ENCODE measurements at regions of chr16 and their contacts with region 1.

Region 1: DNA sequence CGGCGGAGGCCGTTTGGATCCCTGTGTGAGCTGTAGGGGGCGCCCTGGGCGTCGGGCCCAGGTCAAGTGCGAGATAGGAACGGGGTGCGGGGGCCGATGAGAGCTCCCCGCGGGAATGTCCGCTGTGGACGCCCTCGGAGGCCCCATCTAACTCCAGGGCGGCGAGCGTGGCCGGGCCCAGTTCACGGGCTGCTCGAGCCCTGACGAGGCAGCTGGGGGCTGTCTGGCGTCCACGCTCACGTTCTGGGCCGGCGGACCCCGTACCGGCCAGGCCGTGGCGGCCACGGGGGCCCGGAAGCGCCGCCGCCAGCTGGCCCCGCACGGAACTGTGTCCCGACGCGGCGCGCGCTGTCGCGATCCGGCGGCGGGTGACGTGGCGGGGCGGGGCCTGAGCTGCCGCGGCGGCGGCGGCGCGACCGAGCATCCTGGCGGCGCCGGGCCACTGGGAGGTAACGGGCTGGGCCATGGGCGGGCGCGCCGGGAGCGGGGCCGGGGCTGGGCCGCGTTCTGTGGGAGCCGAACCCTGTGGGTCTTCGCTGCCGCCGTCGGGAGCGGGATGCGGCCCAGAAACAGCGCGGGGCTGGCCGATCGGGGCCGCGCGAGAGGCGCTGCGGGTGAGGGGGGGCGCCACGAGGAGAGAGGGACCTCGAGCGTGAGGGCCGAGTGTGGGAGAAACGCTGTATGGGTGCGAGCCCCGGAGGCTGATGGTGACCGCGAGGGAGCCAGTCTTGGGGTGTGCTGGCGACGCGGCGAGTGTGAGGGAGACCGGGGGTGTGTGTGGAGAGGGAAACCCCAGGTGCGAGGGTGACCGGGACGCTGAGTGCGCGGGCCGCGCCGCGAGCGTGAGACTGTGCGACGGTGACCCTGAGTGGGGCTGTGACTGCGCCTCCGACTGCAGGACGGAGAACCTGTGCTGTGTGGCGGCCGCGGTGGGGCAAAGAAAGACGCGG is at the start of gene SLC7A6:
- DNase-seq: peak; percentile 78
- H3K4me3 ChIP-seq: peak within 1 kb of the TSS; percentile 44 to 69 (median 66)
- H3K27ac ChIP-seq: peak within 1 kb of the TSS; percentile 91
- H3K4me1 ChIP-seq: peaks cover 25% of the 10 kb centered on the region
- H3K27me3 ChIP-seq: no peaks in the 10 kb centered on the region
- CTCF ChIP-seq: peak; percentile 81 to 84
- POLR2A ChIP-seq: peak; percentile 68
- total RNA-seq, gene SLC7A6: 68.0 and 68.7 TPM in 2 replicates

Region 2: DNA sequence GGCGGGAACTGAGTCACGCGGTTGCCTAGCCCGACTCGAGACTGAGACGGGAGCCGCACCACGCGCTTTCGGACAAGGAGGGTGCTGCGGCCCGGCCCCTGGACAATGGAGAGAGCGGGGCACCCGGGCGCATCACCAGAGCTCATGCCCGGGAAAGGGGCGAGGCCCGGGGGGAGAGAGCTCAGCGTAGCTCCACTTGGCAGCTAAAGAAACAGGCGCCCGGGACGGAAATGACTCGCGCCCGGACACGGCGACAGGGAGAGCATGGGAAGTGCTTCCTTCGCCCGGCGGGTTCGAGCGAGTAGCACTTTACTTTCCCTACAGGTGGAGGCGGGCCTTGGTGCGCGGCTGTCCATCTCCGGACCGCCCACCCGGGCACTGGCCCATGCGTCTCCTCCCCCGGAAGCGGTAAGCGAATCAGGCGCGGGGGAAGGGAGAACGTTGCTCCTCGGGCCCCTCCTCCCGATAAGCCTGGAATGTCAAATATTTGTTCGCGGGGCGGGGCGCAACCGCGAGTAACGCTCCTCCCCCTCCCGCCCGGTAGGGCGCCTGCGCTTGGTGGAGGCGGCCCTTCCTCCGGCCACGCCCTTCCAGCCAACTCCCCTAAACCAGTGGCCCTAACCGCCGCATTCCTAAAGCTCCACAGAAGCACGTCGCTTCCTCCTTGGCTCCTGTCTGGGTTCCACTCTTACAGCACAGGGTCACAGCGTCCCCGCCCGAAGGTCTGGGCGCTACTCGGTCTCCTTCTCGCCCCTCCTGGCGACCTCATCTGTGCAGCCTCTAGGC is 27.0 kb before region 1 on chr16:
- CTCF ChIA-PET with region 1: interaction called, 30 read pairs
- POLR2A ChIA-PET with region 1: no interaction called
- dilution Hi-C with region 1: no loop called
- intact Hi-C with region 1: no loop called
- DNase-seq: peak; percentile 98
- H3K4me3 ChIP-seq: peak overlapping the region in 2 of 3 experiments; percentile 42 to 43
- H3K27ac ChIP-seq: peak overlapping the region; percentile 93
- H3K4me1 ChIP-seq: peaks cover 13% of the 10 kb centered on the region
- H3K27me3 ChIP-seq: no peaks in the 10 kb centered on the region
- CTCF ChIP-seq: no peak
- POLR2A ChIP-seq: peak; percentile 99

Region 3: DNA sequence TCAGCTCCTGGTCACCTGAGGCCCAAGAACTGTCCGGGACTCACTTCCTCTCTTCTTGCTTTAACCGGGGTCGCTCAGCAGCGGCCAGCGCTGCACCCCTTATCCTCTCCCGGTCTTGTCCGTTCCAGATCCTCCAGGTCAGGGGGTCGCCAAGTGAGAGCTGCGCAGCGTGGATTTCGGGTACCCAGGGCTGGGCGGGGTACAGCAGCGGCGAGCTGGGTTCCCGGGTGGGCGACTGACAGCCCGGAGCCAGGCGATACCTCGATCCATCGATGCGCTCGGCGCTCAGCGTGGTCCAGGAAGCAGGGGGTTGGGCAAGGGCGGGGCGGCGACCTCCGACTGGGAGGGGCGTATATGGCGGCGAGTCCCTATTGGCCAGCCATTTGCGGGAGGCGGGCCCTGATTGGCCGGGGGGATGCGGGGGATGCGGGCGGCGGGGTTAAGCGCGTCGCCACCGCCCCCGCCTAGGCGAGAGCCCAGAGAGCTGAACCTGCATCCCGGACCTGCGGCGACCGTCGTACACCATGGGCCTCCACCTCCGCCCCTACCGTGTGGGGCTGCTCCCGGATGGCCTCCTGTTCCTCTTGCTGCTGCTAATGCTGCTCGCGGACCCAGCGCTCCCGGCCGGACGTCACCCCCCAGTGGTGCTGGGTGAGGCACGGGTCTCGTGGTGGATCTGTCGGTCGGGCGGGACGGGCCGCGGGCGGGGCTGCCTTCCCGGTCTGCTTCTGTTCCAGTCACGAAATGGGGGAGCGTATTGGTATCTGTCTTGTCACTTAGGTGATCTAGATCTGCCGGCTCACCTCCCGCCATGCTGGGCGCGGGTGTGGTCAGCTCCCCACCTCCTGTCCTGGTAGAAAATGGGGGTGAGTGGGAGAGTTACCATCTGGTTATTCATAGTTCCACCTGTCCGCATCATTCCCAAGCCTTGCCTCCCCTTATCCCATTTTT is 19.2 kb before region 1 on chr16 and contains the start of gene PLA2G15:
- CTCF ChIA-PET with region 1: interaction called, 33 read pairs
- POLR2A ChIA-PET with region 1: interaction called, 11 read pairs
- dilution Hi-C with region 1: no loop called
- intact Hi-C with region 1: loop called (anchors 2 kb)
- DNase-seq: peak; percentile 93
- H3K4me3 ChIP-seq: peak within 1 kb of the TSS; percentile 85 to 98 (median 90)
- H3K27ac ChIP-seq: no peak within 1 kb of the TSS
- H3K4me1 ChIP-seq: peaks cover 9% of the 10 kb centered on the region
- H3K27me3 ChIP-seq: no peaks in the 10 kb centered on the region
- CTCF ChIP-seq: no peak
- POLR2A ChIP-seq: peak; percentile 78
- total RNA-seq, gene PLA2G15: 24.0 and 24.3 TPM in 2 replicates

Region 4: DNA sequence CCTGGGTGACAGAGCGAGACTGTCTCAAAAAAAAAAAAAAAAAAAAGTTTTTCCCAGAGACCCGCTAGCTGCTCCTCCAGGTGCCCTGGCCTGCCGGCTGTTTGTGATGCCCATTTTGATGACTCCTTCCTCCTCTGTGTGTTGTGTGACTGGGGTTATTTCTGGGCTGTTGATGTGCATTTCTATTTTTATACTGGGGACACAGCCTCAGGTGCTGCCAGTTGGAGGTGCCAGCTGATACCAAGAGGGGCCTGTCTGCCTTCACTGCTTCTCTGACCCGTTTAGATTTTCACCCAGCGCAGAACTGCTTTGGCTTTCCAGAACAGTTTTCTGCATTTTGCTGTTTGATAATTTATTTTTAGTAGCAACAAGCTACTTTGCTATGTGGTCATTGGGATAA is 12.6 kb before region 1 on chr16:
- CTCF ChIA-PET with region 1: interaction called, 33 read pairs
- POLR2A ChIA-PET with region 1: interaction called, 3 read pairs
- dilution Hi-C with region 1: no loop called
- intact Hi-C with region 1: no loop called
- DNase-seq: no peak
- H3K4me3 ChIP-seq: no peak overlapping the region
- H3K27ac ChIP-seq: no peak overlapping the region
- H3K4me1 ChIP-seq: no peaks in the 10 kb centered on the region
- H3K27me3 ChIP-seq: no peaks in the 10 kb centered on the region
- CTCF ChIP-seq: no peak
- POLR2A ChIP-seq: no peak

Region 5: DNA sequence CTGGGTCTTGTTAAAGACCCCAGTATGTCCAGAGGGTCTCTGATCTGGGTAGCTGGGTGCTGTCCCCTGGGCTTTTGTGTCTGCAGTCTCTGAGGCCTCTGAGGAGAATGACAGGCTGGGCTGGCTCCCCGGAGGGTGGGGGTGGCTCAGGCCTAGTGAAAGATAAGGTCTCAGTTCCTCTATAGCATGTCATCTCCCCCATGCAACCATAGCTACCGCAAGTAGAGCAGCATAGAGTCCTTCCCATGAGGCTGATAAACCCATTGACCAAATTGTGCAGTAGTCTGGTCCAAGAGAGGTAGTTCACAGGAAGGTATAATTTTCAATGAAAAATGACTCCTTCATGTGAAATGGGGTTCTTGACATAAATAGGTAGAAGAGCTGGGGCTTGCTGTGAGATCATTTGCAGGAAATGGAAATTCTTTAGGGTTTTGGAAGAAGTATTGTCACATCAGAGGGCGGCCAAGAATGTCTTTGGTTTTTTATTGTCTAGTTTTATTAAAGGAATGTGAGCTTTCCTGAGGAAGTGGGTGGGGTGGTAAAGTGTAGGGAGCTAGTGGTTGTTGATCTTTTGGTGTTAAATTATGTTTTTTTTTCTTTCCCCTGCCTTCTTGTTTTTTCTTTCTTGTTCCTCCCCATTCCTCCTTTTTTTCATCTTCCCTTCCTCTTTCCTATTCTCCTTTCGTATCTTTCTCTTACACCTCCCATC is 25.4 kb after region 1 on chr16:
- CTCF ChIA-PET with region 1: interaction called, 120 read pairs
- POLR2A ChIA-PET with region 1: interaction called, 9 read pairs
- dilution Hi-C with region 1: no loop called
- intact Hi-C with region 1: loop called (anchors 1 kb)
- DNase-seq: peak; percentile 76
- H3K4me3 ChIP-seq: no peak overlapping the region
- H3K27ac ChIP-seq: peak overlapping the region; percentile 88
- H3K4me1 ChIP-seq: peaks cover 65% of the 10 kb centered on the region
- H3K27me3 ChIP-seq: no peaks in the 10 kb centered on the region
- CTCF ChIP-seq: no peak
- POLR2A ChIP-seq: peak; percentile 78

Region 6: DNA sequence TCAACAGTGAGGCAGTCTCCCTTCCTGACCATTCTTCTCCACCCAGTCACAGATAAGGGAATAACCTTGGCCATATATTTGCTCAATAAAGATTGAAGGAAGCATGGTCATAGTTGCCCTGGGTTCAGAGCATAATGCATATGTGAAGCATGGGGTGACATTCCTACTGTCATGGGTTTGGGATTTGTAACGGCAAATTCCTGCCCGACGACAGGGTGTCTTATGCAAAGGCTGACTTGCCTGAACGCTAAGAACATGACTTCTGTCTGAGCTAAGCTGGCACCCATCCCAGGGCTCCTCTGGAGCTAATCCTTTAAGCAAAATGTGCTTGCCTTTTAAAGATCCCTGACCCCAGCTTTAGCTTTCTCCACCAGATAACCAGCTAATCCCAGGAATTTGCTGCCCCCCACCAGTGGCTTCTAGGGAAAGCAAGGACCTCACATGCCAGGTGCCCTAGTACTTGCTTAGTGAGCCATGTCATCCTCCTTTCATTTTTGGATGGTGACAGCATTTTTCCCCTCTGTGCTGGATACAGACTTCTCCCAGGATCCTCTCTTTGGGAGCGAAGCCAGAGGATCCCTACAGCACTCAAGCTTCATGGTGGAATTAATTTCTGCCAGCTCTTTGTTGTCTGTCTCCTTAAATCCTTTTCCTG is 34.6 kb after region 1 on chr16:
- CTCF ChIA-PET with region 1: interaction called, 120 read pairs
- POLR2A ChIA-PET with region 1: no interaction called
- dilution Hi-C with region 1: no loop called
- intact Hi-C with region 1: no loop called
- DNase-seq: no peak
- H3K4me3 ChIP-seq: no peak overlapping the region
- H3K27ac ChIP-seq: no peak overlapping the region
- H3K4me1 ChIP-seq: no peaks in the 10 kb centered on the region
- H3K27me3 ChIP-seq: no peaks in the 10 kb centered on the region
- CTCF ChIP-seq: no peak
- POLR2A ChIP-seq: peak; percentile 62

Region 7: GRCh38 chr16:68310761-68311511 is 46.5 kb after region 1 on chr16 and contains the starts of genes PRMT7 and SLC7A6OS:
- CTCF ChIA-PET with region 1: interaction called, 51 read pairs
- POLR2A ChIA-PET with region 1: interaction called, 6 read pairs
- dilution Hi-C with region 1: no loop called
- intact Hi-C with region 1: loop called (anchors 1 kb)
- DNase-seq: peak; percentile 95
- H3K4me3 ChIP-seq: peak within 1 kb of the TSS; percentile 80 to 84 (median 83)
- H3K27ac ChIP-seq: peak within 1 kb of the TSS; percentile 58
- H3K4me1 ChIP-seq: peaks cover 20% of the 10 kb centered on the region
- H3K27me3 ChIP-seq: no peaks in the 10 kb centered on the region
- CTCF ChIP-seq: no peak
- POLR2A ChIP-seq: peak; percentile 96
- total RNA-seq, gene PRMT7: 33.8 and 43.4 TPM in 2 replicates
- total RNA-seq, gene SLC7A6OS: 22.0 and 22.9 TPM in 2 replicates

Measured in endothelial cell of umbilical vein (primary cell).